Body of pancreas (tissue), 4 donors: ENCODE measurements at regions of chr9 and their contacts with region 1.

Region 1: GRCh38 chr9:5437254-5438216 is at the start of gene PLGRKT:
- DNase-seq: peak; percentile 95 to 98 (median 96)
- ATAC-seq: peak; percentile 98
- H3K4me3 ChIP-seq: peak within 1 kb of the TSS; percentile 17 to 56
- H3K27ac ChIP-seq: peak within 1 kb of the TSS; percentile 80 to 95 (median 88)
- H3K4me1 ChIP-seq: peaks cover 13% of the 10 kb centered on the region
- H3K27me3 ChIP-seq: no peaks in the 10 kb centered on the region
- CTCF ChIP-seq: peak in 5 of 7 experiments; percentile 14 to 40 (median 28)
- POLR2A ChIP-seq: peak; percentile 81 to 92 (median 88)
- total RNA-seq, gene PLGRKT: 3.3 to 7.8 TPM

Region 2: DNA sequence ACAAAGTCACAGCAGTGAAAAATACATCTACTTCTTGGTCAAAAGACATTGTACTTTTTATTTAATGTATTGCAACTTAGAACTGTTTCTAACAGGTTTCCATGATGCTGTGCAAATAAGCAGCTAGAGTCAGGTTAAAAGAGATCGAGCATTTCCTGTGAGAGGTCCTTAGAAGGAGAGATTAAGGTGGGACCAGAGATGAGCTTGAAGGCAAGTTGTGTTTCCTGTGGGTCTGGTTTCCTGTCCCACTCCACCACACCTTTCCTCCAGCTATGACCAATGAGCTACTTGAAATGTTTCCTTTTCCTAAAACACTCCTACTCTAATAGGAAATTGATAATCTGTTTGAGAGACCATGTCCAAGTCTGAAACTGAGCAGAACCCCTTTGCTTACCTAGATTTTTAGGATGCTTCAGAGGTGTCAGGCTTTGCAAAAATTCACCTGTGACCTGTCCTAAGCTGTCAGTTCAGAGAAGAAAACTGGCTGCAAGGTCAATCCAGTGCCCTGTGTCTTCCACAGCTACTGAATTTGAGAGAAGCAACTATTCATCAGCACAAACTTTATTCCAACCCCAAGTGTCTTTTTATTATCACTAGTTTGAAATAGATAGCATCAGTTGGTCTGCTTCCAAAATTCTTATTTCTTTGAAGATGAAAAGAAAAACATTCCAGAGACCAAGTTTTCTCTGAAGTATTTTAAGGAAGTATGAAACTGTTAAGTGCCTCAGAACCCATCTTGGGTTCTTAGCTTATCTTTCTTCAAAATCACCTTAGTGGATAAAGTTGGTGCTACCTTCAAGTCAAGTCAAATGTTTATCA is 84.7 kb before region 1 on chr9:
- intact Hi-C with region 1: loop called (anchors 10 kb)
- DNase-seq: no peak
- ATAC-seq: no peak
- H3K4me3 ChIP-seq: no peak overlapping the region
- H3K27ac ChIP-seq: no peak overlapping the region
- H3K4me1 ChIP-seq: no peaks in the 10 kb centered on the region
- H3K27me3 ChIP-seq: no peaks in the 10 kb centered on the region
- CTCF ChIP-seq: no peak
- POLR2A ChIP-seq: no peak